GM12878 (cell line): ENCODE measurements at regions of chr12 and their contacts with region 1.

Region 1: GRCh38 chr12:66055837-66056319 is 74.7 kb downstream of the LLPH start:
- DNase-seq: peak; percentile 76
- ATAC-seq: peak; percentile 89
- H3K4me3 ChIP-seq: no peak overlapping the region
- H3K27ac ChIP-seq: peak overlapping the region; percentile 54
- H3K4me1 ChIP-seq: peaks cover 25% of the 10 kb centered on the region
- H3K27me3 ChIP-seq: no peaks in the 10 kb centered on the region
- CTCF ChIP-seq: no peak
- EP300 ChIP-seq: peak; percentile 89 to 98; a peak in 3 of 4 replicates
- POLR2A ChIP-seq: no peak
- RAD21 ChIP-seq: no peak

Region 2: DNA sequence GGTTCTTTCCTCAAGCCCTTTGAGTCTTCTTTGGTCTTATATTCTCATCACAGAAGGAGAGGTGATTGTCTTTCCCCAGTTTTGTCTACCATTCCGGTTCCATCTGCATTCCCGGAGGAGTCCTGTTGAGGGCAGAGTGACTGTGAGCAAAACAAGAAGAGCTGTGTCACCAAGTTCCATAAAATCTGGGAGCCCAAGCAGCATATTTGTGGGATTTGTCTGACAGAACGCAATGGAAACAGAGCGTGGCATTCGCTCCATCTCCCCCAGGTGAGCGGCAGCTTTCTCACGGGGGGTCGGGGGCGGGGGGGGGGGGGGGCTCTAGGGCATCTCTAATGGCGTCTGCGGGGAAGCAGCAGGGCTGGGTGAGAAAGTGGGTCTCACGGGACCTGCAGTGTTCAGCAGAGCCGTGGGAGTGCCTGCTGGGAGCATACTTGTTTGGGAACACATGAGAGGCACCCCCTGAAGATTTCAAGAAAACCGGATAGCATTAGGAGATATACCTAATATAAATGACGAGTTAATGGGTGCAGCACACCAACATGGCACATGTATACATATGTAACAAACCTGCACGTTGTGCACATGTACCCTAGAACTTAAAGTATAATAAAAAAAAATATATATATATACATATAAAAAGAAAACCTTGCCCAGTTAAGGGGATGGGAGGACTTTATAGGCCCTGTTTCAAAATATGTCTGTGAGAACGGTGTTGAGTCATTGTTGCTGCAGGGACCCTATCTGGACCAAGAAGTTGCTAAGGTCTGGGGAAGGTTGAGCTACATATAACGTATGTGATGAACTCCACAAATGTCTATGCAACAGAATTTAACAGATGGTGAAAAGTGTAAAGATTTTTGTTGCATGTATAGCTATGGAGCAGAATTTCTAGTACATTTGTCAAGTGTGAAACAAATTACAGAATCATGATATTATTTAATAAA is 1172.0 kb before region 1 on chr12:
- CTCF ChIA-PET with region 1: no interaction called
- POLR2A ChIA-PET with region 1: no interaction called
- RAD21 ChIA-PET with region 1: interaction called, 3 read pairs
- SMC1A ChIA-PET with region 1: no interaction called
- in situ Hi-C with region 1: no loop called
- intact Hi-C with region 1: loop called (anchors 10 kb)
- DNase-seq: no peak
- ATAC-seq: peak; percentile 59
- H3K4me3 ChIP-seq: peak overlapping the region; percentile 28; the same call in 1 of the 2 replicates
- H3K27ac ChIP-seq: peak overlapping the region; percentile 98
- H3K4me1 ChIP-seq: peaks cover 41% of the 10 kb centered on the region
- H3K27me3 ChIP-seq: no peaks in the 10 kb centered on the region
- CTCF ChIP-seq: no peak
- EP300 ChIP-seq: no peak
- POLR2A ChIP-seq: no peak
- RAD21 ChIP-seq: no peak; the same call in 1 of the 2 replicates

Region 3: GRCh38 chr12:66066137-66066928 is 10.5 kb after region 1 on chr12:
- CTCF ChIA-PET with region 1: interaction called, 8 read pairs
- POLR2A ChIA-PET with region 1: interaction called, 8 read pairs
- RAD21 ChIA-PET with region 1: interaction called, 37 read pairs
- SMC1A ChIA-PET with region 1: interaction called, 77 read pairs
- in situ Hi-C with region 1: no loop called
- intact Hi-C with region 1: no loop called
- DNase-seq: peak; percentile 75
- ATAC-seq: peak; percentile 84
- H3K4me3 ChIP-seq: no peak overlapping the region
- H3K27ac ChIP-seq: peak overlapping the region; percentile 28
- H3K4me1 ChIP-seq: peaks cover 24% of the 10 kb centered on the region
- H3K27me3 ChIP-seq: no peaks in the 10 kb centered on the region
- CTCF ChIP-seq: peak; percentile 19 to 33 (median 33); a peak in 5 of 6 replicates
- EP300 ChIP-seq: peak in 1 of 2 experiments; percentile 62; a peak in 2 of 4 replicates
- POLR2A ChIP-seq: no peak
- RAD21 ChIP-seq: peak; percentile 14; the same call in 1 of the 2 replicates

Region 4: DNA sequence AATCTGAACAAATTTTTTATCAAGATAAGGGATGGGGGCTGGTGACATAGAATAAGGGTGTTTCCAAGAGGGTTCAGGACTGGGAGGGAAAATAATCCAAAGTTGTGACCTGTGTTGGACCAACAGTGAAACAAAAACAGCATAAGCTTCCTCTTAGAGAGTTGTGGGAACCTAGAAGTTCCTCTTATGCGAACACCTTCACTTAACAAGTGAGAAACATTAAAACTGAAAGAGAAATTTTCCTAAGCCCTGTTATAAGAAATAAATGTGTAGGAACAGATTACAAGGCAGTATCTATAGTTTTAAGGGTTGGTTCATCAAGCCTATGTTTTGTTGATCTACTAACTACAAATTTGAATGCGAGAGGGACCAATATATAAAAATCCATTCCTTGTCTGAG is 16.3 kb after region 1 on chr12:
- CTCF ChIA-PET with region 1: interaction called, 4 read pairs
- POLR2A ChIA-PET with region 1: interaction called, 8 read pairs
- RAD21 ChIA-PET with region 1: interaction called, 37 read pairs
- SMC1A ChIA-PET with region 1: interaction called, 77 read pairs
- in situ Hi-C with region 1: no loop called
- intact Hi-C with region 1: loop called (anchors 1 kb)
- DNase-seq: no peak
- ATAC-seq: peak; percentile 83
- H3K4me3 ChIP-seq: no peak overlapping the region
- H3K27ac ChIP-seq: peak overlapping the region; percentile 93
- H3K4me1 ChIP-seq: peaks cover 24% of the 10 kb centered on the region
- H3K27me3 ChIP-seq: no peaks in the 10 kb centered on the region
- CTCF ChIP-seq: no peak
- EP300 ChIP-seq: 0 out of 4 replicates have a peak, but pooled peaks have one; percentile 32 to 37
- POLR2A ChIP-seq: no peak
- RAD21 ChIP-seq: no peak; the same call in 1 of the 2 replicates